ENCODE measurements at regions of chr2 and their contacts with region 1.

Region 1: GRCh38 chr2:212548450-212548819 is 9.8 kb upstream of the ERBB4 start:
- DNase-seq: peak in 1 of 2 donors; percentile 14
- ATAC-seq: peak; percentile 70 to 90
- H3K4me3 ChIP-seq: peak overlapping the region in 1 of 4 donors; percentile 3
- H3K27ac ChIP-seq: no peak overlapping the region
- H3K4me1 ChIP-seq: peaks cover 0 to 6% of the 10 kb centered on the region in 2 donors
- H3K27me3 ChIP-seq: no peaks in the 10 kb centered on the region
- CTCF ChIP-seq: peak in 4 of 5 experiments; percentile 33 to 53 (median 42)
- POLR2A ChIP-seq: no peak

Region 2: DNA sequence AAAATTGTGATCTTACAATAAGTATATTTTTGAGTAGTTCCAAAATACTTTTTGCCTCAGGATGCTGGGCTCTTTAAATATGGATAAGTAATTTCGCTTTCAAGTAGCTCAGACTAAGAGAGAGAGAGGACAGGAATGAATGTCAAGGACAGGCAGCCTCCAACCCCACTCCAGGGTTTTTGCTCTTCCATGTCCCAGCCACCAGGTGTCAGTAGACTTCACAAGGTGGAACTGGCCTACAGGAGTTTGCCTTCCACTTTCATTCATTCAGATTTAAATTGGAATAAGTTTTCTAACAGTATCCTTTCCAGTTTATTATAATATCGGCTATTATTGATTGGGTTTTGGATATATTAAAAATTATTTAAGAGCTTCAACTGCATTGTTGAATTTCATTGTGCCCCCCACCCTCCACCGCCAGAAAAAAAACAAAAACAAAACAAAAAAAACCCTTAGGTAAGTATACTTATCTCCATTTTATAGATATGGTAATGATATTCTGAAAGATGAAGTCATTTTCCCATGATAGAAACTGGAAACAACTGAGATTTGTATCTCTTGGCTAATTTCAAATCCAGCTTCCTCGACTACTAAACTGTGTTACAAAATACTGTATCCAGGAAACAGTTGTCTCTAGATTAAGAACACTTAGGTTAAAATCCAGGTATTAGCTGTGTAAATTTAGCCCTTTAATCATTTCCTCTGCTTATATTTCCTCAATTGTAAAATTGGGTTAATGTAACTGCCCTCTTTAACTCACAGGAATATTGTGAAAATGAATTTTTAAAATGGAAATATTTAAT is 802.9 kb before region 1 on chr2:
- in situ Hi-C with region 1: loop called in 1 of 4 experiments (anchors 10 kb)
- intact Hi-C with region 1: loop called (anchors 2 kb)
- DNase-seq: peak; percentile 6 to 31
- ATAC-seq: peak in 1 of 2 donors; percentile 74
- H3K4me3 ChIP-seq: no peak overlapping the region
- H3K27ac ChIP-seq: no peak overlapping the region
- H3K4me1 ChIP-seq: peaks cover 0 to 5% of the 10 kb centered on the region in 2 donors
- H3K27me3 ChIP-seq: no peaks in the 10 kb centered on the region
- CTCF ChIP-seq: peak; percentile 49 to 85 (median 73)
- POLR2A ChIP-seq: no peak

Region 3: GRCh38 chr2:211751848-211752247 is 796.6 kb before region 1 on chr2:
- in situ Hi-C with region 1: loop called in 1 of 4 experiments (anchors 10 kb)
- intact Hi-C with region 1: no loop called
- DNase-seq: no peak
- ATAC-seq: no peak
- H3K4me3 ChIP-seq: no peak overlapping the region
- H3K27ac ChIP-seq: no peak overlapping the region
- H3K4me1 ChIP-seq: peaks cover 0 to 4% of the 10 kb centered on the region in 2 donors
- H3K27me3 ChIP-seq: no peaks in the 10 kb centered on the region
- CTCF ChIP-seq: no peak
- POLR2A ChIP-seq: no peak

Region 4: GRCh38 chr2:211879323-211879722 is 669.1 kb before region 1 on chr2:
- in situ Hi-C with region 1: loop called in 1 of 4 experiments (anchors 25 kb)
- intact Hi-C with region 1: loop called (anchors 10 kb)
- DNase-seq: no peak
- ATAC-seq: no peak
- H3K4me3 ChIP-seq: no peak overlapping the region
- H3K27ac ChIP-seq: no peak overlapping the region
- H3K4me1 ChIP-seq: no peaks in the 10 kb centered on the region
- H3K27me3 ChIP-seq: no peaks in the 10 kb centered on the region
- CTCF ChIP-seq: peak in 3 of 5 experiments; percentile 14 to 33 (median 29)
- POLR2A ChIP-seq: no peak

Region 5: GRCh38 chr2:211900005-211900404 is 648.4 kb before region 1 on chr2:
- in situ Hi-C with region 1: loop called in 1 of 4 experiments (anchors 25 kb)
- intact Hi-C with region 1: loop called (anchors 10 kb)
- DNase-seq: no peak
- ATAC-seq: peak; percentile 76 to 89
- H3K4me3 ChIP-seq: peak overlapping the region; percentile 24 to 39 (median 32)
- H3K27ac ChIP-seq: peak overlapping the region; percentile 72 to 84 (median 78)
- H3K4me1 ChIP-seq: peaks cover 27 to 30% of the 10 kb centered on the region in 2 donors
- H3K27me3 ChIP-seq: no peaks in the 10 kb centered on the region
- CTCF ChIP-seq: no peak
- POLR2A ChIP-seq: no peak

Measured in gastrocnemius medialis (tissue), 4 donors.